ENCODE measurements at regions of chr12 and their contacts with region 1.

Region 1: GRCh38 chr12:4037747-4038312 is 164.6 kb upstream of the PARP11 start:
- DNase-seq: peak in 4 of 5 donors; percentile 4 to 20 (median 8)
- H3K4me3 ChIP-seq: no peak overlapping the region
- H3K4me3 Mint-ChIP-seq: no peak overlapping the region
- H3K27ac ChIP-seq: no peak overlapping the region
- H3K27ac Mint-ChIP-seq: peak overlapping the region in 1 of 7 donors; percentile 39
- H3K4me1 ChIP-seq: no peaks in the 10 kb centered on the region
- H3K4me1 Mint-ChIP-seq: peaks cover 0 to 6% (median under 1%) of the 10 kb centered on the region in 4 donors
- H3K27me3 ChIP-seq: no peaks in the 10 kb centered on the region
- H3K27me3 Mint-ChIP-seq: no peaks in the 10 kb centered on the region

Region 2: DNA sequence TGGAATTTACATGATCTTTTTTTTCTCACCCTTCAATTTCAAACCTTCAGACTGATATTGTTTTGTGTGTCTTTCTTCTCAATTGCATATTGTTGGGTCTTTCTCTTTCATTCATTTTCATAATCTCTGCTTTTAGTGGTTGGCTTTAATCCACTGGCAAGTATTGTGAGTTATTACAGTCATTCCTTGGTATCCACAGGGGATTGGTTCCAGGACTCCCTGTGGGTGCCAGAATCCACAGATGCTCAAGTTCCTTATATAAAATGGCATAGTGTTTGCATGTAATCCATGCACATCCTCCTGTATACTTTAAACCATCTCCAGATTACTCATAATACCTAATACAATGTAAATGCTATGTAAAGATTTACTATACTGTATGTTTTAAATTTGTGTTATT is 134.9 kb before region 1 on chr12:
- CTCF ChIA-PET with region 1: no interaction called
- POLR2A ChIA-PET with region 1: no interaction called
- intact Hi-C with region 1: no loop called
- DNase-seq: no peak
- H3K4me3 ChIP-seq: no peak overlapping the region
- H3K4me3 Mint-ChIP-seq: peak overlapping the region in 1 of 8 donors; percentile 41
- H3K27ac ChIP-seq: no peak overlapping the region
- H3K27ac Mint-ChIP-seq: peak overlapping the region in 6 of 7 donors; percentile 37 to 72 (median 56)
- H3K4me1 ChIP-seq: peaks cover 55% of the 10 kb centered on the region
- H3K4me1 Mint-ChIP-seq: peaks cover 28 to 44% (median 35%) of the 10 kb centered on the region in 4 donors
- H3K27me3 ChIP-seq: no peaks in the 10 kb centered on the region
- H3K27me3 Mint-ChIP-seq: no peaks in the 10 kb centered on the region

Region 3: DNA sequence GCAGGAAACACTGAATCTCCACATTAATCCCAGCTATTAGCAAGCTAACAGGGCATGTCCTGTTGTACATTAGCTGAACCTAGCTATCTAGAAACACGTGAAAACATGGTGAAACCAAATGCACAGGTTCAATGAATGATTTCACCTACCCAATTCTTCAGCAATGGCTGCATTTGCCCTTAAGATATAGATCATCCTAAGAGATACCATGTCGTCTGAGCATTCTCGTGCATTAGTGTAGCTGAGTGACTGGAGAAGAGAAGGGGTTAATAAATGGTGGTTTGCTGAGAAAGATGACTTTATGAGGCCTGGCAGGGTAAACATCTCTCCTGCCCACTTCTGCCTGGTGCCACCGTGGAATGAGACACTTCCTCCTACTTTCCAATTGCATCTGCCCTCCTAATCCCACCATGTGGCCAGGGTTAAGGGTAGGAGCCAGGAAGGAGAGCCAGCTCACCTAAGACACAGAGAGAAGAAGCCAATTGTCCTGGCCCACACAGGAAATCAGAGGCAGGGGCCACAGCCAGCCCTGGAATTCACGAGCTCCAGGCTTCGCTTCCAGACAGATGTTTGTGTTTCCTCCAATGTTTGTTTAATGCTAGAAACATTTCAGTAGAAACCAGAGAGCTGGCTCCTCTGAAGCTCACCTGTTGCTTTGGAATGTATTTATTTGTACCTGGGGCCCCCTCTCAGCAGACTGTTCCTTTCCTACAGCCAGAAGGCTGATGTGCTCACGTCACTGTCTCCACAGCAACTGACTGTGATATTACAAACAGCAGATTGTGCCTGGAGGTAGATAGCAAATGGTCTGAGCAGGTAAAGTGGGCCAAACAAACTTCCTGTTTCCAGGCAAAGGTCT is 38.6 kb before region 1 on chr12:
- CTCF ChIA-PET with region 1: interaction called, 72 read pairs
- POLR2A ChIA-PET with region 1: interaction called, 3 read pairs
- intact Hi-C with region 1: loop called (anchors 1 kb)
- DNase-seq: peak; percentile 39 to 60 (median 55)
- H3K4me3 ChIP-seq: no peak overlapping the region
- H3K4me3 Mint-ChIP-seq: peak overlapping the region in 1 of 8 donors; percentile 15
- H3K27ac ChIP-seq: no peak overlapping the region
- H3K27ac Mint-ChIP-seq: peak overlapping the region in 6 of 7 donors; percentile 70 to 87 (median 84)
- H3K4me1 ChIP-seq: peaks cover 9% of the 10 kb centered on the region
- H3K4me1 Mint-ChIP-seq: peaks cover 7 to 30% (median 20%) of the 10 kb centered on the region in 4 donors
- H3K27me3 ChIP-seq: no peaks in the 10 kb centered on the region
- H3K27me3 Mint-ChIP-seq: no peaks in the 10 kb centered on the region